Activated CD4-positive, alpha-beta T cell treated with anti-CD3 and anti-CD28 coated beads for 36 hours (primary cell): ENCODE measurements at regions of chr1 and their contacts with region 1.

Region 1: GRCh38 chr1:230753586-230754251 is 6.5 kb downstream of the CAPN9 start:
- DNase-seq: peak; percentile 79
- ATAC-seq: peak; percentile 93
- H3K4me3 Mint-ChIP-seq: peak overlapping the region; percentile 49
- H3K27ac Mint-ChIP-seq: no peak overlapping the region
- H3K4me1 Mint-ChIP-seq: peaks cover 7% of the 10 kb centered on the region
- H3K27me3 Mint-ChIP-seq: peaks cover 2% of the 10 kb centered on the region

Region 2: DNA sequence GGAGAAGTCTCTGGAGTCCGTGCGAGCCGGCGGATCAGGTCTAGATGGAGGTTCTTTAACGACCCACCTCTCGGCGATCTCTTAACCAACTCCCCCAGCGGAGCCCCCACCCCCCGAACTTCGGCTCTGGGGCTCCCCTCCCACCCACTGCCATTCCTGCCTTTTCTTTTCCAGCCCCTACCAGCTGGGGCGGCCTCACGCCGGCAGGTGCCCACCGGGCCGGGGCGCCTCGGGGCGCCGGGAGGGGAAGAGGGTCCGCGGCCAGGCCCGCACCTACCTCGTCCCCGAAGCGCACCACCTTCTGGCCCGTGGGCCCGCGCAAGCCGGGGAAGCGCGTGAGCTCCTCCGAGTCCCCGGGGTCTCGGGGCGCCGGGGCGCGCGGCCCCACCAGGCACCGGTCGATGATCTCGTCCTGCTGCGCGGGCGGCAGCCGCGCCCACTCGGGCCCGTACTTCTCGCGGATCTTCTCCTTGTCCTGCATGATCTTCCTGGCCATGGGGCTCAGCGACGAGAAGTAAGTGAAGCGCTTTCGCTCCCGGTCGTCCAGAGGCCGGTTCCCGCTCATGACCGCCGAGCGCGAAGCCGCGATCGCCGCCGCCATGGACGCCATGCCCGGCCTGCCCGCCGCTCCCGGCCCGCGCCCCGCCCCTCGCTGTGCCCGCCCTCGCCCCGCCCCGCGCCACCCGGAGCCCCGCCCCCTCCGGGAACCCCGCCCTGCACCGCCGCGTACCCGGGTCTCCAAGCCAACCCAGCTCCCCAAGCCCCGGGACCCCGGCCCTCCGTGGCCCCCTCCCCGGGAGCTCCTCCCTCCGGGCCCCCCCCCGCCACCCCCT is 114.4 kb after region 1 on chr1 and contains the start of gene C1orf198:
- CTCF ChIA-PET with region 1: no interaction called
- POLR2A ChIA-PET with region 1: no interaction called
- intact Hi-C with region 1: loop called in 1 of 2 experiments (anchors 1 kb)
- DNase-seq: peak; percentile 86
- ATAC-seq: peak; percentile 90
- H3K4me3 Mint-ChIP-seq: peak within 1 kb of the TSS; percentile 80
- H3K27ac Mint-ChIP-seq: peak within 1 kb of the TSS; percentile 21
- H3K4me1 Mint-ChIP-seq: peaks cover 22% of the 10 kb centered on the region
- H3K27me3 Mint-ChIP-seq: peaks cover 14% of the 10 kb centered on the region
- total RNA-seq, gene C1orf198: 5.8 to 6.9 TPM